ENCODE measurements at regions of chr3 and their contacts with region 1.

Region 1: GRCh38 chr3:192207233-192207632 is 520.1 kb downstream of the FGF12 start:
- DNase-seq: no peak
- ATAC-seq: no peak
- H3K4me3 ChIP-seq: no peak overlapping the region
- H3K4me3 Mint-ChIP-seq: no peak overlapping the region
- H3K27ac ChIP-seq: no peak overlapping the region
- H3K27ac Mint-ChIP-seq: no peak overlapping the region
- H3K4me1 ChIP-seq: no peaks in the 10 kb centered on the region
- H3K4me1 Mint-ChIP-seq: no peaks in the 10 kb centered on the region
- H3K27me3 ChIP-seq: no peaks in the 10 kb centered on the region
- H3K27me3 Mint-ChIP-seq: no peaks in the 10 kb centered on the region

Region 2: DNA sequence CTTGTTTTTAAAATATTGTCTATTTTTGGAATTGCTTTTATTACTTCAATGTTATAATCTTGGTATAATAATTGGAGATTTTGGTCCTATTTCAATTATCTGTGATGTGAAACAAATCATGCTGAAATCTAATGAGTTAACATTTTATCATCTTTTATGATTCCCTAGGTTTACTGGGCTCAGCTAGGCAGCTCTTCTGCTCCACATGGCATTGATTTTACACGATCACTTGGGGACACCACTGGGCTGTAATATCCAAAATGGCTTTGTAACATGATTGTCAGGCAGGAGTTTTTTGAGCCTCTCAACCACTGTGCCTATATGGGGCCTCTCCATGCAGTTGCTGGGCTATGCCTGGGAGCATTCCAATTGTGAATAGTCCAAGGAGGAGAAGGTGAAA is 582.9 kb before region 1 on chr3:
- CTCF ChIA-PET with region 1: no interaction called
- POLR2A ChIA-PET with region 1: no interaction called
- DNase-seq: no peak
- ATAC-seq: no peak
- H3K4me3 ChIP-seq: no peak overlapping the region
- H3K4me3 Mint-ChIP-seq: no peak overlapping the region
- H3K27ac ChIP-seq: no peak overlapping the region
- H3K27ac Mint-ChIP-seq: no peak overlapping the region
- H3K4me1 ChIP-seq: no peaks in the 10 kb centered on the region
- H3K4me1 Mint-ChIP-seq: no peaks in the 10 kb centered on the region
- H3K27me3 ChIP-seq: no peaks in the 10 kb centered on the region
- H3K27me3 Mint-ChIP-seq: no peaks in the 10 kb centered on the region

Region 3: DNA sequence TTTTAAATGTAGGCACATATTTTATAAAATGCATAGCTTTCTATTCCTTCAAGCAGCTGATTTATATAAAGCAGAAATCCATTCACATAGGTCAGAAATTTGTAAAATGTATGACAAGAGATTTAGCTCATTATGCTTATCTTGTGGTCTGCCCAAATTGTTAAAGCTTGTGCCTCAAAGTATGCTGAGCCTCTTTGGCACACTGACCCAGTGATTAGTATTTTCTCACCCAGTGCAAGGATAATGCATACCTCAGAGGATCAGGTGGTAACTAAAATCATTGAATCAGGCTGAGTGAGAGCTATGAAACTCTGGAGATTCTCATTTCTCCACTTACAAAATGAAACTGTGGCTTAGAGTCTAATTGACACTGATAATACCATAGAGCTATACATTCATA is 13.1 kb before region 1 on chr3:
- CTCF ChIA-PET with region 1: interaction called, 9 to 11 read pairs
- POLR2A ChIA-PET with region 1: interaction called in 1 of 2 experiments, 4 read pairs
- DNase-seq: no peak
- ATAC-seq: no peak
- H3K4me3 ChIP-seq: no peak overlapping the region
- H3K4me3 Mint-ChIP-seq: no peak overlapping the region
- H3K27ac ChIP-seq: no peak overlapping the region
- H3K27ac Mint-ChIP-seq: no peak overlapping the region
- H3K4me1 ChIP-seq: no peaks in the 10 kb centered on the region
- H3K4me1 Mint-ChIP-seq: no peaks in the 10 kb centered on the region
- H3K27me3 ChIP-seq: no peaks in the 10 kb centered on the region
- H3K27me3 Mint-ChIP-seq: no peaks in the 10 kb centered on the region